ENCODE measurements at regions of chr3 and their contacts with region 1.

Region 1: DNA sequence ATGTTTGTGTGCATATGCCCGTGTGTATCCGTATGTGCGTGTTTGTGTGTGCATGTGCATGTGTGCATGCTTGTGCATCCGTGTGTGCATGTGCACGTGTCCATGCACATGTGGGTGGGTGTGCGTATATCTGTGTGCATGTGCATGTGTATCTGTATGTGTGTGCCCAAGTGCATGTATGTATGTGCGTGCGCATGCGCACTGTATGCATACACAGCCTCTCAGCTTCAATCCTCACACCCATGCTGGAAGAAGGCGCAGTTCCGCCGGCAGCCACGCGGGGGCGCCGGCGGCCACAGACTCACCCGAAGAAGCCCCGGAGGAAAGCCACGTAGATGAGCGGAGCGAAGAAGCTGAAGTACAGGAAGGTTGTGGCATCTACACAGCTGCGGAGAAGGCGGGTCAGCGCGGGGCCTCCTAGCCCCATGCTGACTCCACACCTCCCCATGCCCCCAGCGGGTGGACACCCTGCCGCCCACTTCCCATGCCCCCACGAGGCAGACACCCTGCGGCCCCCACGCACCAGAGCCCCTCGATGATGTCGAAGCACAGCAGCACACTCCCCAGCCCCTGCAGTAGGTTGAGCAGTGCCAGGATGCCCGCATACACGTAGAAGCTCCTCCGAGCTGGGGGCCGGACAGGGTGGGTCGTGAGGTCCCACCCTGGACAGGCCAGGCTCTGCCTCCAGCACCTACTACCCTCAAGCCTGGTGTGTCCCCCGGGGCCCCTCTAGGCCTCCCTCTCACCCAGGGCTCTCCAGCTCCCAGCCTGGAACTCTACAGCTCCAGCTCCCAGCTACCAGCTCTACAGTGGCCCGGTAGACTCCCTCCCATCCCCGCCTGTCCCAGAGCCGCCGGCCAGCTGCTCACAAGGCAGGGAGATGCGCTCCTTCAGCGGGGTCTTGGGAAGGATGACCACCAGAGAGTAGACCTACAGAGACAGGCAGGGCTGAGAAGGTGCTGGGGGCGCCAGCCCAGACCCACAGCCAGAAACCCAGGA is 15.4 kb downstream of the TPRA1 start:
- DNase-seq: peak; percentile 93
- H3K4me3 Mint-ChIP-seq: no peak overlapping the region
- H3K27ac Mint-ChIP-seq: no peak overlapping the region
- H3K4me1 Mint-ChIP-seq: peaks cover 19% of the 10 kb centered on the region
- H3K27me3 Mint-ChIP-seq: no peaks in the 10 kb centered on the region
- CTCF ChIP-seq: peak; percentile 100

Region 2: DNA sequence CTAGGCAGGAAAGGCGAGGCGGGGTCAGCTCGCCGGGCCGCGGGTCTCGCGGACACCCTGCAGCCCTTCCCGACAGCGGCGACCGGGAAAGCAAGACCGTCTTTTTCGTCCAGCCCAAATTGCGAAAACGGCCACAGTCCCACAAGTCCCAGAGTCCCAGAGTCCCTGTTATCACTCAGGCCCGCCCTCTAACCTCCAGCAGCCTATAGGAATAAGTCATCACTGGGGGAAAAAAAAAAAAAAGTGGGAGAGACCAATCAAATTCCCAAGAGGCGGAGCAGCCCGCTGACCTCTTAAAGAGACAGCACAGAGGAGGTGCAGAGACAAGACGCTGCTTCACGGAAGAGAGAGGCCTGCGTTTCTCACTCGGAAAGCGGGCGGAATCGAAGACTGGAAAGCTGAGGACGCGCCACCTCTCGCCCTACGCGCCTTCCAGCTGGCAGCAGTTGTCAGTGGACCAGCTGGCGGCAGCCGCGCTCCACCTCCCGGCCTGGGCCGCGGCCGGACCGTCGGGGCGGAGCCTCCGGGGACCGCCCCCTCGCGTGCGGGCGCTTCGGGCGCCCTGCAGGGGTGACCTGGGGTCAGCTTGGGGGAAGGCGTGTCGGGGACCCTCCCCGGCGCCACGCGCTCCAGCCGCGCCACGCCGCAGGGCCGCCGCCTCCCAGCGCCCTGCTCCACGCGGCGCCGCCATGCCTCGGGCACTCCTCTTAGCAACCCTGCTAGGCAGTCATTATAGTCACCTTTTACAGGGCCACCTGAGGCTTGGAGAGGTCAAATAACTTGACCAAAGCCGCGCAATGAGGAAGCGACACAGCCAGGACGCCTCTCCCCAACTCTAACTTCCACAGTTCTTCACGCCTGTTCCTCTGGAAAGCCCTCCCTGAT is 15.7 kb after region 1 on chr3 and contains the start of gene TPRA1:
- CTCF ChIA-PET with region 1: interaction called, 15 read pairs
- intact Hi-C with region 1: no loop called
- DNase-seq: peak; percentile 95
- H3K4me3 Mint-ChIP-seq: peak within 1 kb of the TSS; percentile 72
- H3K27ac Mint-ChIP-seq: peak within 1 kb of the TSS; percentile 94
- H3K4me1 Mint-ChIP-seq: peaks cover 30% of the 10 kb centered on the region
- H3K27me3 Mint-ChIP-seq: no peaks in the 10 kb centered on the region
- CTCF ChIP-seq: no peak
- total RNA-seq, gene TPRA1: 62.4 and 66.4 TPM in 2 replicates

Region 3: GRCh38 chr3:127690823-127691452 is 115.8 kb after region 1 on chr3:
- CTCF ChIA-PET with region 1: interaction called, 18 read pairs
- intact Hi-C with region 1: loop called (anchors 5 kb)
- DNase-seq: peak; percentile 81
- H3K4me3 Mint-ChIP-seq: no peak overlapping the region
- H3K27ac Mint-ChIP-seq: no peak overlapping the region
- H3K4me1 Mint-ChIP-seq: no peaks in the 10 kb centered on the region
- H3K27me3 Mint-ChIP-seq: no peaks in the 10 kb centered on the region
- CTCF ChIP-seq: peak; percentile 75

Region 4: DNA sequence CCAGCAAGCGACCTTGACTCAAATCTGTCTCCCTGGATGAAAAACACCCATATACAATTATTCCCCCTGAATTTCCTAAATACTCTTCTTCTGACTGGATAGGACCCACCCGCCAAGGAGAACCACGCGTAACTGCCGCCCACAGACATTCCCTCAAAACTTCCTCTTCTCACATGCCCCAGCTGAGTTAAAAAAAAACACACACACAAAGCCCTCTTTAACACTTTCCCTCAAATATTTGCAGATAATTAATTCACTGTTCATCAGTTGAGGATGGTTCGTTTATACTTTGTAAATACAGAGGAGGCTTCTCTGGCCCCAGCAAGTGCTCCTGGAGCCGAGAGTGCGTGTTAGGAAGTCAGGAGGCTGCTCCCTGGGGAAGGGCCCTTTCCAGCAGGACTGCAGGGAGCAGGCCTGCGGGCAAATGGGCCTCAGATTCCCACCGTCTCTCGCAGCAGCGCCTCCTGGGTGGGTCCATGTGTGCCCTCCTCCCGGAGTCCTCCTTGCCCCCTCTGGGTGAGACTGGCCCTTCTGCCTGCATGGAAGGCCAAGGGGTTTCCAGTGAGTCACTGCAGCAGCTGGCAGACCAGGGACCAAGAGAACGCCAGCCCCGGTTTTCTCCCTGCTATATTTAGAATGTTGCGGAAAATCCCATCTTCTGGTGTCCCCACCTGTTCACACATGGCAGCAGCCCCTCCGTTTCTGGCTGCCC is 200.4 kb after region 1 on chr3:
- CTCF ChIA-PET with region 1: no interaction called
- intact Hi-C with region 1: no loop called
- DNase-seq: no peak
- H3K4me3 Mint-ChIP-seq: no peak overlapping the region
- H3K27ac Mint-ChIP-seq: peak overlapping the region; percentile 38
- H3K4me1 Mint-ChIP-seq: peaks cover 30% of the 10 kb centered on the region
- H3K27me3 Mint-ChIP-seq: no peaks in the 10 kb centered on the region
- CTCF ChIP-seq: no peak

Region 5: DNA sequence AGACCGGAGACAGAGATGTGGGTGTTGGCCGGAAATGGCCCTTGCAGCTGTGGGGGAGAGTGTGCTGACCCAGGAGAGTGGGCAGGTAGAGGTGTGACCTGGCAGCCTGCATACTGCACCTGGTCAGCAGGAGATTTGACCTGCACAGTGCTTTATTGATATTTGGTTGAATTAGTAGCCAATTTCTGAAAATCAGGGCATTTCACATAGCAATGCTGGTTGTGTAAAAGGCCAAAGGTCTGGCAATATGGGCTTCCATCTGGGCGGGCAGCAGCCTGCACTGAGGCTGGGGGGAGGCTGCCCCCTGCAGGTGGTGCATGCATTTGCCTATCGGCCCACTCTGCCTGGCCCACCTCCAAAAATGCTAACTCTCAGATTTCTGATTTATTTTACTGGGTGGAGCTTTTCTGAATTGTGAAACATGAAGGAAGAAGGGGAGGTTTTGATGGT is 256.6 kb after region 1 on chr3:
- CTCF ChIA-PET with region 1: interaction called, 5 read pairs
- intact Hi-C with region 1: loop called (anchors 5 kb)
- DNase-seq: peak; percentile 90
- H3K4me3 Mint-ChIP-seq: no peak overlapping the region
- H3K27ac Mint-ChIP-seq: no peak overlapping the region
- H3K4me1 Mint-ChIP-seq: peaks cover 25% of the 10 kb centered on the region
- H3K27me3 Mint-ChIP-seq: no peaks in the 10 kb centered on the region
- CTCF ChIP-seq: peak; percentile 96